ENCODE measurements at regions of chr3 and their contacts with region 1.

Region 1: DNA sequence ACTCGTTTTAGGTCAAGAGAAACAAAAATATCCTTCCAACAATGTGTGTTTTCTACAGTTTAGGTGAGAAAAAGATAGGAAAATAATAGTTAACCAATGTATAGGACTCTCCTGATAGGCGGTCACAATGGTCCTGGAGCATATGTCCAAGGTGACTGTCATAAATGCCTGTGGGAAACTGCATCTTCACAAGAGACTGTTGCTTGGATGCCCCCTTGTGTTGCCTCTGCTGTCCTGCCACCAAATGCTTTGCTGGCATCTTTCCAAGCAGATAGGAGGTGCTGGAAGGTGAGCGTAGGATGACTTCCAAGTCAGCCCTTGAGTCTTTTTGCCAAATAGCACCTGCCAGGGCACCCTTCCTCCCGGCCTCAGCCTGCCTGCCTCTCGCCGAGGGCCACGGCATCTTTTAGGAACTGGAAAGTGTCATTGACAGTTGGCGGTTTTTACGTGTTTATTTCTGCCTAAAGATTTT is 24.1 kb upstream of the SACM1L start:
- DNase-seq: peak; percentile 82
- H3K4me3 Mint-ChIP-seq: peak overlapping the region; percentile 84
- H3K27ac Mint-ChIP-seq: peak overlapping the region; percentile 88
- H3K4me1 Mint-ChIP-seq: peaks cover 52% of the 10 kb centered on the region
- H3K27me3 Mint-ChIP-seq: no peaks in the 10 kb centered on the region

Region 2: DNA sequence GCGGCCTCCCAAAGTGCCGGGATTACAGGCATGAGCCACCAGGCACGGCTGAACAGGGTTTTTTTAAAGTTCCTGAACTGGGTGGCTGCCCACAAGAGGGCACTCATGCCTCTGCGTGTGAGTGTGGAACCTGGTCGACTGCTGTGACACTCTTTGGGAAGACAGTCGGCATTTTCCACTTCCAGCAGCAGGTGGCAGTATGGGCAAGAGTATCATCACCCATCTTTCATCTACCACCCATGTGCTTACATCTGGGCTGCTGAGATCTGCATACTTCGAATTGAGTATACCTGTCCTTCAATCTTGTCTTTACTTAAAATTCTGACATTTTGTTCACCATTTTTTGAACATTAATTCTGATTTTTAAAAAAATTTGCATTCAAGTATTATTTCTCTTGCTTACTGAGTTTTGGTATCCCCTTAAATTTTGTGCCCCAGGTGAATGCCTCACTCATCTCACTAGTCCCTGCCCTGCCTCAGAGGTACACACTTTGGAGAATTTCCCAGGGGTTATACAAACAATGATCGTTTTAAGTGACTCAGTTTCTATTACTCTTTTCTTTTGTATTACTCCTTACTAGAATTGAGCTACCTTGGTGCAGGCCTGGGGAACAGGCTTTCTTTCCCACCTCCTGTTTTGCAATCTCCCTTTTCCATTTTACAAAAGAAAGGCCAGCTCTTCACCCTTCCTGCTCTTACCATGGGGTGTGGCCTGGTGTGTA is 627.2 kb before region 1 on chr3:
- CTCF ChIA-PET with region 1: interaction called, 5 read pairs
- intact Hi-C with region 1: loop called (anchors 2 kb)
- DNase-seq: peak; percentile 97
- H3K4me3 Mint-ChIP-seq: peak overlapping the region; percentile 17
- H3K27ac Mint-ChIP-seq: no peak overlapping the region
- H3K4me1 Mint-ChIP-seq: peaks cover 41% of the 10 kb centered on the region
- H3K27me3 Mint-ChIP-seq: peaks cover 16% of the 10 kb centered on the region

Region 3: DNA sequence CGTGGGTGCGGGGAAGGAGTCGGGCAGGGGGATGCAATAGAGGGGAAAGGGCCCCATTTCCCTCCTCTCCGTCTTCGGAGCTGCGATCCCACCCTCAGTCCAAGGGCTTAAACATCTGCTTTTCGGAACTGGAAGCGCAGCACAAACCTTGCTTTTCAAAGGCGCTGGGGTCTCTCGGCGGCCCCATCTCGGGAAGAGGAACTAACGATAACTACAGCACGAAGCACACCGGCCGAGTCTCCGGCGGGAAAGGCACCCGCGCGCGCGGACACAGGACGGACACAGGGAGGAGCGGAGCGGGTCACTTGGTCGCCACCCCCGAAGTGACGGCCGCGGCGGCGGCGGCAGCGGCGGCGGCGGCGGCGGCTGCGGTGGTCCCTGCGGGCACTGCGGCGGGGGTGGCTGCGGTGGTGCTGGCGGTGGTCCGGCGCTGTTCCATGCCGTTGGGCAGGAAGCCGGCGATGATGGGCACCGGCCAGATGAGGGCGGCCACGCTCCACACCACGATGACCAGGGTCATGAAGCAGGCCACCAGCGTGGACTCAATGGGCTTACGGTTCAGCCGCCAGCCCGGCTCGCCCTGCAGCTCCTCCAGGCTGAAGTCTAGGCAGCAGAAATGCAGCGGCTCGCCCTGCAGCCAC is 440.2 kb before region 1 on chr3:
- CTCF ChIA-PET with region 1: no interaction called
- intact Hi-C with region 1: loop called (anchors 5 kb)
- DNase-seq: peak; percentile 57
- H3K4me3 Mint-ChIP-seq: peak overlapping the region; percentile 71
- H3K27ac Mint-ChIP-seq: no peak overlapping the region
- H3K4me1 Mint-ChIP-seq: peaks cover 10% of the 10 kb centered on the region
- H3K27me3 Mint-ChIP-seq: peaks cover 64% of the 10 kb centered on the region

Region 4: GRCh38 chr3:45455040-45455439 is 210.1 kb before region 1 on chr3:
- CTCF ChIA-PET with region 1: no interaction called
- intact Hi-C with region 1: no loop called
- DNase-seq: no peak
- H3K4me3 Mint-ChIP-seq: no peak overlapping the region
- H3K27ac Mint-ChIP-seq: no peak overlapping the region
- H3K4me1 Mint-ChIP-seq: no peaks in the 10 kb centered on the region
- H3K27me3 Mint-ChIP-seq: no peaks in the 10 kb centered on the region

Region 5: GRCh38 chr3:45688882-45689756 is 24.0 kb after region 1 on chr3 and contains the start of gene SACM1L:
- CTCF ChIA-PET with region 1: interaction called, 17 read pairs
- intact Hi-C with region 1: loop called (anchors 1 kb)
- DNase-seq: peak; percentile 98
- H3K4me3 Mint-ChIP-seq: peak within 1 kb of the TSS; percentile 83
- H3K27ac Mint-ChIP-seq: peak within 1 kb of the TSS; percentile 90
- H3K4me1 Mint-ChIP-seq: peaks cover 44% of the 10 kb centered on the region
- H3K27me3 Mint-ChIP-seq: peaks cover 3% of the 10 kb centered on the region
- total RNA-seq, gene SACM1L: 44.9 to 51.0 TPM

Region 6: GRCh38 chr3:45841757-45842491 is 176.8 kb after region 1 on chr3 and contains the start of gene LZTFL1:
- CTCF ChIA-PET with region 1: no interaction called
- intact Hi-C with region 1: no loop called
- DNase-seq: peak; percentile 96
- H3K4me3 Mint-ChIP-seq: peak within 1 kb of the TSS; percentile 90
- H3K27ac Mint-ChIP-seq: peak within 1 kb of the TSS; percentile 27
- H3K4me1 Mint-ChIP-seq: peaks cover 12% of the 10 kb centered on the region
- H3K27me3 Mint-ChIP-seq: no peaks in the 10 kb centered on the region
- total RNA-seq, gene LZTFL1: 3.6 to 4.1 TPM

Region 7: GRCh38 chr3:45915518-45916231 is 250.5 kb after region 1 on chr3:
- CTCF ChIA-PET with region 1: no interaction called
- intact Hi-C with region 1: loop called (anchors 5 kb)
- DNase-seq: peak; percentile 83
- H3K4me3 Mint-ChIP-seq: no peak overlapping the region
- H3K27ac Mint-ChIP-seq: no peak overlapping the region
- H3K4me1 Mint-ChIP-seq: peaks cover 24% of the 10 kb centered on the region
- H3K27me3 Mint-ChIP-seq: peaks cover 7% of the 10 kb centered on the region

Region 8: GRCh38 chr3:45938864-45939263 is 273.7 kb after region 1 on chr3:
- CTCF ChIA-PET with region 1: no interaction called
- intact Hi-C with region 1: no loop called
- DNase-seq: peak; percentile 94
- H3K4me3 Mint-ChIP-seq: no peak overlapping the region
- H3K27ac Mint-ChIP-seq: no peak overlapping the region
- H3K4me1 Mint-ChIP-seq: peaks cover 25% of the 10 kb centered on the region
- H3K27me3 Mint-ChIP-seq: peaks cover 3% of the 10 kb centered on the region

Region 9: GRCh38 chr3:46065294-46065721 is 400.2 kb after region 1 on chr3:
- CTCF ChIA-PET with region 1: no interaction called
- intact Hi-C with region 1: loop called (anchors 1 kb)
- DNase-seq: peak; percentile 89
- H3K4me3 Mint-ChIP-seq: no peak overlapping the region
- H3K27ac Mint-ChIP-seq: no peak overlapping the region
- H3K4me1 Mint-ChIP-seq: peaks cover 67% of the 10 kb centered on the region
- H3K27me3 Mint-ChIP-seq: peaks cover 49% of the 10 kb centered on the region